PC-9 (cell line): ENCODE measurements at regions of chr5 and their contacts with region 1.

Region 1: DNA sequence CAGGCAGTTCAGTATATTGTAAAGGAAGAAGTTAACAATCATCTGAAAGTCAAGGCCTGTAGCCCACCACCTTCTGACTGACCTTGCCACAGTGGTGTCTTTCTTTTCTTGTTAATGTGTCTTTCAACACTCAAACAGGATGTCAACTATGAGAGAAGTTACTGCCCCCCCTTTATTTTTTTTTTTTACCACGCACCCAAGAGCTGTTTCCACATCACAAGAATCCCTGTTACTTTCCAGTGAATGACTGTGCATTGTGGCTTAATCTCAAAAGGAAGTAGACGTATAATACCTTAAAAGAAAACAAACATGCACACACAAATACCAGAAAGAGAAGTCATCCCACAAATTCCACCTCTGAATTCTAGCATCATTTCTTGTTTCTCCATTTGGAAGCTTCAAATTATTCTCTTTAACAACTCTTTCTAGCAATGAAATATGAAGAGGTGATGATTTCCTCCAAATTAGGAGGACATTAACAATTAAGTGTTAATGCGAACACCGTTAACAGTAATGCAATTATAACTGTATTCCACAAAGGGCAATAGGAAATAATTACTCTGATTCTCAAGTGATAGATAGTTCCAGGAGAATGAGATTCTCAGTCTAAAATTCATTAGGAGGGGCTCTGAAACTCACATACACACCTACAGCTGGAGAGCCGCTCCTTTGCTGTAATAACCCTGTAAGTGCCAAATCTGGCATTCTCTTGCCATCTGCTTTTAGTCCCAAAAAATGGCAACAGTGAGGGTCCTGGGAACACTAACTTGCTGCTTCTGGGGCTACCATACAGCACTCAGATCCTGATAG is 201.0 kb downstream of the EFNA5 start:
- DNase-seq: peak; percentile 46 to 98
- H3K4me3 ChIP-seq: peak overlapping the region; percentile 22; the same call in 1 of the 2 replicates
- H3K27ac ChIP-seq: peak overlapping the region; percentile 96
- H3K4me1 ChIP-seq: peaks cover 94% of the 10 kb centered on the region
- H3K27me3 ChIP-seq: no peaks in the 10 kb centered on the region
- CTCF ChIP-seq: no peak

Region 2: GRCh38 chr5:106397700-106398099 is 1072.0 kb before region 1 on chr5:
- CTCF ChIA-PET with region 1: no interaction called
- POLR2A ChIA-PET with region 1: no interaction called
- intact Hi-C with region 1: loop called (anchors 5 kb)
- DNase-seq: peak; percentile 66 to 95
- H3K4me3 ChIP-seq: no peak overlapping the region
- H3K27ac ChIP-seq: peak overlapping the region; percentile 89
- H3K4me1 ChIP-seq: peaks cover 41% of the 10 kb centered on the region
- H3K27me3 ChIP-seq: no peaks in the 10 kb centered on the region
- CTCF ChIP-seq: no peak

Region 3: GRCh38 chr5:107389130-107389774 is 80.4 kb before region 1 on chr5:
- CTCF ChIA-PET with region 1: no interaction called
- POLR2A ChIA-PET with region 1: interaction called, 5 read pairs
- intact Hi-C with region 1: loop called (anchors 1 kb)
- DNase-seq: peak; percentile 41 to 97
- H3K4me3 ChIP-seq: peak overlapping the region; percentile 2; the same call in 1 of the 2 replicates
- H3K27ac ChIP-seq: peak overlapping the region; percentile 94
- H3K4me1 ChIP-seq: peaks cover 49% of the 10 kb centered on the region
- H3K27me3 ChIP-seq: no peaks in the 10 kb centered on the region
- CTCF ChIP-seq: no peak

Region 4: GRCh38 chr5:107455111-107455588 is 14.5 kb before region 1 on chr5:
- CTCF ChIA-PET with region 1: no interaction called
- POLR2A ChIA-PET with region 1: interaction called, 4 read pairs
- intact Hi-C with region 1: loop called (anchors 2 kb)
- DNase-seq: peak in 1 of 2 experiments; percentile 89
- H3K4me3 ChIP-seq: peak overlapping the region; percentile 13; the same call in 1 of the 2 replicates
- H3K27ac ChIP-seq: peak overlapping the region; percentile 72
- H3K4me1 ChIP-seq: peaks cover 47% of the 10 kb centered on the region
- H3K27me3 ChIP-seq: no peaks in the 10 kb centered on the region
- CTCF ChIP-seq: no peak

Region 5: GRCh38 chr5:107557051-107557658 is 87.5 kb after region 1 on chr5:
- CTCF ChIA-PET with region 1: no interaction called
- POLR2A ChIA-PET with region 1: interaction called, 8 read pairs
- intact Hi-C with region 1: loop called (anchors 1 kb)
- DNase-seq: peak; percentile 95 to 99
- H3K4me3 ChIP-seq: peak overlapping the region; percentile 38; the same call in 1 of the 2 replicates
- H3K27ac ChIP-seq: peak overlapping the region; percentile 96
- H3K4me1 ChIP-seq: peaks cover 65% of the 10 kb centered on the region
- H3K27me3 ChIP-seq: no peaks in the 10 kb centered on the region
- CTCF ChIP-seq: no peak

Region 6: DNA sequence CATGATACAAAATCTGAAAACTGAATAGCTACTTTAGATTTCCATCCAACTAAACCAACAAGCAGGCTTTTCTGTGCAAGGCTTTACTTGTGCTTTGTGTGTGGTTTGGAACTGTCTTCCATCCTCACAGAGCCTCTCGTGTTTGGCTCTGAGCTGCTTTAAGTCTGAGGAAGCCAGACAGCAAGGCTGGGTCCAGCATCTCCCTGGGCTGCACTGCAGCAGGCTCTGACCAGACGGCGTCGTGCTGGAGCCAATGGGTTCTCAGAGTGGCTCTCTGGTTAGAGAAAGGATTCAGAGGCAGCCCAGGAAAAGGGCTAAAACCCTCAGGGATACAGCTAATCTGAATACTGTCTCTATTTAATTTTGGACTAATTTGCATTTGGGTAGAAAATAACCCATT is 409.0 kb after region 1 on chr5:
- CTCF ChIA-PET with region 1: no interaction called
- POLR2A ChIA-PET with region 1: no interaction called
- intact Hi-C with region 1: no loop called
- DNase-seq: no peak
- H3K4me3 ChIP-seq: no peak overlapping the region
- H3K27ac ChIP-seq: no peak overlapping the region
- H3K4me1 ChIP-seq: no peaks in the 10 kb centered on the region
- H3K27me3 ChIP-seq: no peaks in the 10 kb centered on the region
- CTCF ChIP-seq: no peak